Right ventricle myocardium inferior (tissue), 1 donor: ENCODE measurements at regions of chr4 and their contacts with region 1.

Region 1: GRCh38 chr4:57163530-57164459 is 53.6 kb upstream of the IGFBP7 start:
- DNase-seq: peak; percentile 92
- ATAC-seq: peak; percentile 97

Region 2: DNA sequence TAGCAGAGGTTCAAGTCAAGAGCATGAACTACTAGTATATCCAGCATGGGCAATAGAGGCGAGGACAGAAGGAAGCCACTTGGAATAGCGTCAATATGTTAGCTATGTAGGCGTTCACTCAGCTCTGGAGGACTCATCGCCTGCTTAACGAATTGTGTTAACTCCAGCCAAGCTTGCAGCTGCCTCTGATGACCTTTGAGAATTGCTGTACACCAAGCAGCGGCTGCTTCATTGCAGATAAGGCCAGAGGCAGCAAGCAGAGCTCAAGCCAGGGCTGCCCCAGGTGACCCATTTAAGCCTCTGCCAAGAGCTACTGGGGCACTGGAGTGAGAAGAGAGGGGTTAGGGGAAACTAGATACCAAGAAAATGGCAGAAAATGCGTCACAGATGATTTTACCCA is 106.6 kb after region 1 on chr4:
- intact Hi-C with region 1: loop called (anchors 2 kb)
- DNase-seq: peak; percentile 80
- ATAC-seq: peak; percentile 97

Region 3: DNA sequence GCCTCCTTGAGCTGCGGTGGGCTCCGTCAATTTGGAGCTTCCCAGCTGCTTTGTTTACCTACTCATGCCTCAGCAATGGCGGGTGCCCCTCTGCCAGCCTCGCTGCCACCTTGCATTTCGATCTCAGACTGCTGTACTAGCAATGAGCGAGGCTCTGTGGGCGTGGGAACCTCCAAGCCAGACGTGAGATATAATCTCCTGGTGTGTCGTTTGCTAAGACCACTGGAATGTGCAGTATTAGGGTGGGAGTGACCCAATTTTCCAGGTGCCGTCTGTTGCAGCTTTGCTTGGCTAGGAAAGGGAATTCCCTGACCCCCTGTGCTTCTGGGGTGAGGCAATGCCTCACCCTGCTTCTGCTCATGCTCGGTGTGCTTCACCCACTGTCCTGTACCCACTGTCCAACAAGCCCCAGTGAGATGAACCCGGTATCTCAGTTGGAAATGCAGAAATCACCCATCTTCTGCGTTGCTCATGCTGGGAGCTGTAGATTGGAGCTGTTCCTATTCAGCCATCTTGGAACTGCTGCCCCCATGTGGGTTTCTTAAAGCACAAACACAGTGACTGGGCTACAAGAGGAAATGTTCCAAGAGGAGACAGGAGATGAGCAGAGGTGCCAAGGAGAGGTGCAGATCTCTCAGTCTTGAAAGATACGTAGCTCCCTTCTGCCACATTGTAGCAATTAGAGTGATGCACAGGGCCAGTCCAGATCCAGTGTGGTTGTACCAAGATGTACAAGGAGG is 139.4 kb after region 1 on chr4:
- intact Hi-C with region 1: loop called (anchors 2 kb)
- DNase-seq: no peak
- ATAC-seq: no peak

Region 4: GRCh38 chr4:57426779-57427395 is 263.1 kb after region 1 on chr4:
- intact Hi-C with region 1: loop called (anchors 2 kb)
- DNase-seq: no peak
- ATAC-seq: peak; percentile 68

Region 5: GRCh38 chr4:57734104-57734670 is 570.4 kb after region 1 on chr4:
- intact Hi-C with region 1: loop called (anchors 5 kb)
- DNase-seq: no peak
- ATAC-seq: peak; percentile 97